Natural killer cell (primary cell): ENCODE measurements at regions of chr12 and their contacts with region 1.

Region 1: DNA sequence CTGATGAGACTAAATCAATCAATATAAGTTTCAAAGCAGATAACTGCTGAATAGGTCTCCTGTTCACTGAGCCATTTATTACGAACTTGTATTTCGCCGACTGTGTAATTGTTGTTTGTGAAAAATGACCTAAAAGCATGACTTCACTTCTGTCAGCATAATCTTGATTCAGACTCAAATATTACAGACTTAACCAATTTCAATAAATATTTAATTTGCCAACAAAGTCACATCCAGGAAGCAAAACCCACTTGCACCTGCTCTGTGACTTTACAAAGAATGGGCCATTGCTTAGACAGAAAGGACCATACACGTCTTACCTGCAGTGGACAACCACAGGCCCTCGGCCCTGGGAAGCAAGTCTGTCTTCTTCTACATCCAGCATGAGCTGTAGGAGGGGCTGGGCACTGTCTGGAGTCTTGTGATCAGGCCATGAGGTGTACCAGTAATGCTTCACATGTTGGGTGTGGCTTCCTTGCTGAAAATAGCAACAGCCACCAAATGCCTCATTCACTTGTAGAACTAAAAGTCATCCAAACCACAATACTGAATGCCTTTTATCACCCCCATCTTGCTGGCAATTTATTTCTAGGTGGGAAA is 23.5 kb upstream of the PTPRB start:
- DNase-seq: peak; percentile 14 to 57
- ATAC-seq: peak; percentile 85 to 92 (median 87)
- H3K4me3 ChIP-seq: no peak overlapping the region
- H3K4me3 Mint-ChIP-seq: peak overlapping the region; percentile 45
- H3K27ac ChIP-seq: peak overlapping the region; percentile 58
- H3K27ac Mint-ChIP-seq: peak overlapping the region; percentile 88 to 90
- H3K4me1 ChIP-seq: peaks cover 9% of the 10 kb centered on the region
- H3K4me1 Mint-ChIP-seq: peaks cover 39 to 47% of the 10 kb centered on the region in 2 donors
- H3K27me3 ChIP-seq: no peaks in the 10 kb centered on the region
- H3K27me3 Mint-ChIP-seq: no peaks in the 10 kb centered on the region
- CTCF ChIP-seq: no peak

Region 2: GRCh38 chr12:70609711-70610491 is 50.8 kb before region 1 on chr12:
- intact Hi-C with region 1: loop called (anchors 5 kb)
- DNase-seq: peak in 1 of 2 donors; percentile 29
- ATAC-seq: peak; percentile 67 to 92 (median 87)
- H3K4me3 ChIP-seq: peak overlapping the region; percentile 41
- H3K4me3 Mint-ChIP-seq: peak overlapping the region; percentile 91
- H3K27ac ChIP-seq: no peak overlapping the region
- H3K27ac Mint-ChIP-seq: peak overlapping the region; percentile 68 to 88
- H3K4me1 ChIP-seq: peaks cover 9% of the 10 kb centered on the region
- H3K4me1 Mint-ChIP-seq: peaks cover 12 to 22% of the 10 kb centered on the region in 2 donors
- H3K27me3 ChIP-seq: peaks cover 3% of the 10 kb centered on the region
- H3K27me3 Mint-ChIP-seq: peaks cover 6 to 7% of the 10 kb centered on the region in 2 donors
- CTCF ChIP-seq: no peak

Region 3: DNA sequence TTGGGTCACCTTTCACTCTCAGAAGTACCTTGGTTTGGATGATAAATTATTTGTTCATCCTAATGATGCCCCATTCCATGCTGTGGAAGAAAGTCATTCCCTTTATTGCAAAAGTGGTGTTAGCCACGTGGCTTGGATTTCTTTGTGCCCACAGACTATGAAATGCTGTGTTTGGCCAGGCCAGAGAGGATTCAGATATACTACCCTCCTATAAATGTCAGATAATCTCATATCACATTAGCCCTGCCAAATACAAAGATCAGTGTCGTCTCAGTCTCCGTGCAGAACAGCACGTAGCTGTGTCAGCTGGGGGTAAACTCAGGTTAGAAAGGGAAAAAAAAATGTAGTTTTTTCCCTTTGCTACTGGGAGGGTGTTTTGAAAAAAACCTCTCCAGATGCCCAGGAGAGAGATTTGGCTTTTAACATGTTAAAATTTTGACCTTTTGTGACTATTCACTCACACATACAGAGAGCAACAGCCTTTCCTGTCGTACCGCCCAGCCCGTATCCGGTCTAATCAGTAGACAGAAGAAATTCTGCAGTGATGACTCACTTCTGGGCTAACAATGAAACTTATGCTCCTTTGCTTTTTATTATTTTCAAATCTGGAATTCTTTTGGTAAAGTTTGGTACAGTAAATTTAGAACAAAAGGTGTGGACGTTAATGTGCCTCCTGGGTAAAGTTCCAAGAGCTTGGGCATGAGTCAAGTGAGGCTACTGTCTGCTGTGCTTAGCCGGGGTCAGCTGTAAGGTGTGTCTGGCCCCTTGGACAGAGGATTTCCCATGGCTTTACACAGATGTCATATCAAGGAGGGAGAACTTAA is 15.0 kb before region 1 on chr12:
- intact Hi-C with region 1: loop called (anchors 1 kb)
- DNase-seq: peak; percentile 11 to 46
- ATAC-seq: peak; percentile 96 to 98 (median 96)
- H3K4me3 ChIP-seq: peak overlapping the region; percentile 11
- H3K4me3 Mint-ChIP-seq: peak overlapping the region; percentile 88
- H3K27ac ChIP-seq: peak overlapping the region; percentile 97
- H3K27ac Mint-ChIP-seq: peak overlapping the region; percentile 92 to 96
- H3K4me1 ChIP-seq: peaks cover 15% of the 10 kb centered on the region
- H3K4me1 Mint-ChIP-seq: peaks cover 42 to 51% of the 10 kb centered on the region in 2 donors
- H3K27me3 ChIP-seq: no peaks in the 10 kb centered on the region
- H3K27me3 Mint-ChIP-seq: no peaks in the 10 kb centered on the region
- CTCF ChIP-seq: no peak

Region 4: GRCh38 chr12:71125515-71125914 is 464.8 kb after region 1 on chr12:
- intact Hi-C with region 1: no loop called
- DNase-seq: no peak
- ATAC-seq: no peak
- H3K4me3 ChIP-seq: no peak overlapping the region
- H3K4me3 Mint-ChIP-seq: no peak overlapping the region
- H3K27ac ChIP-seq: no peak overlapping the region
- H3K27ac Mint-ChIP-seq: no peak overlapping the region
- H3K4me1 ChIP-seq: no peaks in the 10 kb centered on the region
- H3K4me1 Mint-ChIP-seq: no peaks in the 10 kb centered on the region
- H3K27me3 ChIP-seq: no peaks in the 10 kb centered on the region
- H3K27me3 Mint-ChIP-seq: no peaks in the 10 kb centered on the region
- CTCF ChIP-seq: no peak